Caco-2 (cell line): ENCODE measurements at regions of chr2 and their contacts with region 1.

Region 1: GRCh38 chr2:197869501-197870111 is 65.2 kb downstream of the PLCL1 start:
- DNase-seq: peak in 1 of 2 experiments; percentile 20
- H3K4me3 ChIP-seq: no peak overlapping the region
- H3K4me3 Mint-ChIP-seq: no peak overlapping the region
- H3K27ac Mint-ChIP-seq: no peak overlapping the region
- H3K4me1 ChIP-seq: peaks cover 7% of the 10 kb centered on the region; the same call in 1 of the 2 replicates
- H3K4me1 Mint-ChIP-seq: peaks cover 9% of the 10 kb centered on the region
- H3K27me3 ChIP-seq: no peaks in the 10 kb centered on the region
- H3K27me3 Mint-ChIP-seq: no peaks in the 10 kb centered on the region
- CTCF ChIP-seq: no peak

Region 2: GRCh38 chr2:197946562-197946961 is 77.0 kb after region 1 on chr2:
- CTCF ChIA-PET with region 1: no interaction called
- POLR2A ChIA-PET with region 1: no interaction called
- intact Hi-C with region 1: loop called (anchors 2 kb)
- DNase-seq: no peak
- H3K4me3 ChIP-seq: no peak overlapping the region
- H3K4me3 Mint-ChIP-seq: no peak overlapping the region
- H3K27ac Mint-ChIP-seq: no peak overlapping the region
- H3K4me1 ChIP-seq: no peaks in the 10 kb centered on the region
- H3K4me1 Mint-ChIP-seq: no peaks in the 10 kb centered on the region
- H3K27me3 ChIP-seq: no peaks in the 10 kb centered on the region
- H3K27me3 Mint-ChIP-seq: peaks cover 10% of the 10 kb centered on the region
- CTCF ChIP-seq: no peak